MCF 10A (cell line): ENCODE measurements at regions of chr5 and their contacts with region 1.

Region 1: GRCh38 chr5:144170276-144171024 is at the starts of genes KCTD16 and YIPF5:
- DNase-seq: peak; percentile 99
- H3K4me3 Mint-ChIP-seq: peak within 1 kb of the TSS; percentile 94
- H3K27ac Mint-ChIP-seq: peak within 1 kb of the TSS; percentile 97
- H3K4me1 Mint-ChIP-seq: peaks cover 37% of the 10 kb centered on the region
- H3K27me3 Mint-ChIP-seq: no peaks in the 10 kb centered on the region
- CTCF ChIP-seq: no peak
- total RNA-seq, gene KCTD16: 0.16 and 0.20 TPM in 2 replicates
- total RNA-seq, gene YIPF5: 88.7 and 115 TPM in 2 replicates

Region 2: GRCh38 chr5:143448518-143448917 is 721.9 kb before region 1 on chr5:
- CTCF ChIA-PET with region 1: no interaction called
- POLR2A ChIA-PET with region 1: no interaction called
- intact Hi-C with region 1: no loop called
- DNase-seq: no peak
- H3K4me3 Mint-ChIP-seq: no peak overlapping the region
- H3K27ac Mint-ChIP-seq: no peak overlapping the region
- H3K4me1 Mint-ChIP-seq: no peaks in the 10 kb centered on the region
- H3K27me3 Mint-ChIP-seq: no peaks in the 10 kb centered on the region
- CTCF ChIP-seq: no peak

Region 3: GRCh38 chr5:144032375-144032774 is 138.1 kb before region 1 on chr5:
- CTCF ChIA-PET with region 1: no interaction called
- POLR2A ChIA-PET with region 1: no interaction called
- intact Hi-C with region 1: no loop called
- DNase-seq: no peak
- H3K4me3 Mint-ChIP-seq: no peak overlapping the region
- H3K27ac Mint-ChIP-seq: no peak overlapping the region
- H3K4me1 Mint-ChIP-seq: peaks cover 6% of the 10 kb centered on the region
- H3K27me3 Mint-ChIP-seq: no peaks in the 10 kb centered on the region
- CTCF ChIP-seq: no peak

Region 4: GRCh38 chr5:144156767-144157171 is 13.7 kb before region 1 on chr5:
- CTCF ChIA-PET with region 1: interaction called, 3 read pairs
- POLR2A ChIA-PET with region 1: interaction called, 54 read pairs
- intact Hi-C with region 1: no loop called
- DNase-seq: no peak
- H3K4me3 Mint-ChIP-seq: no peak overlapping the region
- H3K27ac Mint-ChIP-seq: peak overlapping the region; percentile 44
- H3K4me1 Mint-ChIP-seq: peaks cover 5% of the 10 kb centered on the region
- H3K27me3 Mint-ChIP-seq: no peaks in the 10 kb centered on the region
- CTCF ChIP-seq: no peak

Region 5: GRCh38 chr5:144191998-144192397 is 21.5 kb after region 1 on chr5:
- CTCF ChIA-PET with region 1: interaction called, 5 read pairs
- POLR2A ChIA-PET with region 1: interaction called, 28 read pairs
- intact Hi-C with region 1: no loop called
- DNase-seq: peak; percentile 86
- H3K4me3 Mint-ChIP-seq: no peak overlapping the region
- H3K27ac Mint-ChIP-seq: no peak overlapping the region
- H3K4me1 Mint-ChIP-seq: peaks cover 30% of the 10 kb centered on the region
- H3K27me3 Mint-ChIP-seq: no peaks in the 10 kb centered on the region
- CTCF ChIP-seq: peak; percentile 41